ENCODE measurements at regions of chr7 and their contacts with region 1.

Region 1: GRCh38 chr7:153588586-153588985 is 463.6 kb upstream of the DPP6 start:
- DNase-seq: no peak
- H3K4me3 ChIP-seq: no peak overlapping the region
- H3K27ac ChIP-seq: no peak overlapping the region
- H3K27me3 ChIP-seq: peaks cover 0 to 3% (median 0%) of the 10 kb centered on the region in 45 donors
- CTCF ChIP-seq: no peak

Region 2: DNA sequence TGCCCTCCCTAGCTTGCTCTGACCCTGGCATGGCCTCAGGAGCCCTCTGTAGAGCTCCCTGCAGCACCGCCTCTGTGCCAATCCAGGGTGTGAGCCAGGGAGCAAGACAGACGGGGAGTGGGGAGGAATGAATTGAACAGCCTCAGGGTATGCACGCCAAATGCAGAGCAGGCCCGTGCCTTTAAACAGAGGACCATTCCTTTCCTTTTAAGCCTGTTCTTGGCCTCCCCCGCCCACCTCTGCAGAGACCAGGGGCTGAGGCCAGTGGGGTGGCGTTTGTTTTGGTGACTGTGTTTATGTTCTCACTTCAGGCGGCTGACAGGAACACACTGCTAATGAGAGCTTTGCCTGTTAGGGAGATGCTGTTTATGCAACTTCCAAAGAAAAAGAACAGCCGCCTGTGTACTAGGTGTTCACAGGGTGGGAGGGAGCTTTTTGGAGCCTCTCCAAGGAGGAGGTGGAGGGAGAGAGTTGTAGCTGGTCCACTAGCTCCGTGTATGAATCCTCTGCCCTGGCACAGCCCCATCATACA is 64.5 kb before region 1 on chr7:
- intact Hi-C with region 1: loop called in 1 of 2 experiments (anchors 10 kb)
- DNase-seq: peak in 7 of 10 donors; percentile 6 to 94 (median 49)
- H3K4me3 ChIP-seq: no peak overlapping the region
- H3K27ac ChIP-seq: peak overlapping the region in 4 of 59 donors; percentile 9 to 93 (median 22)
- H3K27me3 ChIP-seq: peaks cover 0 to 17% (median 0%) of the 10 kb centered on the region in 45 donors
- CTCF ChIP-seq: no peak

Region 3: DNA sequence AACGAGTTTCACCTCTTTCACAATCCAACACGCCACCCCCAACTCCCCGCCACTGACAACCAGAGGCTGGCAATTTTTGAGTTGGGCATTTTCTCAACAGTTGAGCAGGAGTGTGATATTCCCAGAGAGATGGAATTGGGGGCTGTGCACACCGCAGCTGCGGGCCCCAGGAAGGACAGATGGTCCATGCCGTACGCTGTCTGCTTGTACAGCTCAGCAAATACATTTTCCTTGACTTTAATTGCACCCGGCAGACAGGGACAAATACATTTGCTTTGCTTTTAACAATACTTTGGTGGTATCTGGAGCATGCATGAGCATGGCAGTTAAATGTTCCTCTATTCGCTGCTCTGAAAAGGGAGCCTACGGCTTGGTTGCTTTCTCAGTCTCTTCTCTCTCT is 109.5 kb after region 1 on chr7:
- intact Hi-C with region 1: no loop called
- DNase-seq: no peak
- H3K4me3 ChIP-seq: no peak overlapping the region
- H3K27ac ChIP-seq: no peak overlapping the region
- H3K27me3 ChIP-seq: no peaks in the 10 kb centered on the region
- CTCF ChIP-seq: no peak